Activated T-helper 1 cell treated with anti-CD3 and anti-CD28 coated beads, Interleukin-12 subunit alpha, Interleukin-12 subunit beta, Interleukin-2, Interleukin-4 antibody, amounts not matched to agents 30 ng/mL and 10 ng/mL and 1 ng/mL, durations not matched to agents 14 hours and 24 hours and 36 hours (primary cell): ENCODE measurements at regions of chr5 and their contacts with region 1.

Region 1: DNA sequence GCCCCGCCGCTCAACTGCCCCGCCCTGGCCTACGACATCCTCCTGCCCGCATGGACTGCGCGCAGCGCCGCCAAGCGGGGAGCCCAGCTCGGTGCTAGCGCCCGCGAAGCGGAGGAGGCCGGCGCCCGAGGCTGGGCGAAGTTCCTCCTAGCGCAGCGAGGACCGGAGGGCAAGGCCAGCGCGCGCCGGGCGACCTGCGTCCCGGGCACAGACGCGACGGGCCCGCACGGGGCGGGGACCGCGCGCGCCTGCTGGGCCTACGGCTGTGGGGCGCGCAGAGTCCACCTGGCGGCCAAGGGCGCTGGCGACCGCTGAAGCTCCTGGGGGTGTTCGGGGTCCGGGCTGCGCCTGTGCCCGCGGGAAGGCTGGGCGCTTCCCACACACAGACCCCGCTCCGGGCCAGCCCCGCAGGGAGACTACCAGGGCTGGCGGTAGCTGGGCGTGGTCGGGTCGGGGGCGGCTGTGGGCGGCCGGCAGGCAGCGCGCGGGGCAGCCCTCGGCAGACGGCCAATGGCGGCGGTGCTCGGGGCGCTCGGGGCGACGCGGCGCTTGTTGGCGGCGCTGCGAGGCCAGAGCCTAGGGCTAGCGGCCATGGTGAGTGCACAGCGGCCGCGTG is at the start of gene PCBD2:
- DNase-seq: peak; percentile 91
- H3K4me3 Mint-ChIP-seq: peak within 1 kb of the TSS; percentile 94
- H3K27ac Mint-ChIP-seq: peak within 1 kb of the TSS; percentile 99
- H3K4me1 Mint-ChIP-seq: peaks cover 15% of the 10 kb centered on the region
- H3K27me3 Mint-ChIP-seq: no peaks in the 10 kb centered on the region
- total RNA-seq, gene PCBD2: 13.5 and 17.2 TPM in 2 replicates

Region 2: GRCh38 chr5:134176511-134177368 is 728.0 kb before region 1 on chr5 and contains the start of gene SKP1:
- intact Hi-C with region 1: loop called (anchors 2 kb)
- DNase-seq: peak; percentile 85
- H3K4me3 Mint-ChIP-seq: peak within 1 kb of the TSS; percentile 96
- H3K27ac Mint-ChIP-seq: peak within 1 kb of the TSS; percentile 97
- H3K4me1 Mint-ChIP-seq: peaks cover 28% of the 10 kb centered on the region
- H3K27me3 Mint-ChIP-seq: peaks cover 6% of the 10 kb centered on the region
- total RNA-seq, gene SKP1: 259 and 265 TPM in 2 replicates

Region 3: DNA sequence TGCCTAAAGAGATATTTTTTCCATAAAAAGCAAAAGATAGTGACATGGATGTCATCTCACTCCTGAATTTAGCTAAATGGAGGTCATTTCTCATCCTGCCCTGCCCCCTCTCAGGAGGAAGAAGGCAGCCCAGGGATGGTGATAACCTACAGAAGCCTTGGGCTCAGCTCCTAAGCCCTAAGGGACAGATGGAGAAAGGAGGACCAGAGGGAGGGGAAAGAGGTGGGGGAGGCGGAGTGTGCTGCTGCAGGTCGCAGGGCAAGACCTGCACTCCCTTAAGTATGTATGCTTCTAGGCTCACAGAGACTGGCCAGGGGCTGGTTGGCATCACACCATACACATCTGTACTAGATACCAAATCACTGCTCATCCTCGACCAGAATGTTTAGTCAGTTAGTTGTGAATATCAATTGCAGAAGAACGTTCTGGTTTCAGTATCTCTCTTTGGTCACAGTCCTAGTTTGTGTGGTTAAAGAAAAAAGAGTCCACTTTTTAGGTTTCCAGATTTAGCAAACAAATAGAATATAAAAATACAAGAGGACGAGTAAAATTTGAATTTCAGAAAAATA is 474.7 kb before region 1 on chr5:
- intact Hi-C with region 1: no loop called
- DNase-seq: no peak
- H3K4me3 Mint-ChIP-seq: no peak overlapping the region
- H3K27ac Mint-ChIP-seq: no peak overlapping the region
- H3K4me1 Mint-ChIP-seq: peaks cover 13% of the 10 kb centered on the region
- H3K27me3 Mint-ChIP-seq: peaks cover 23% of the 10 kb centered on the region

Region 4: GRCh38 chr5:134758504-134759341 is 146.0 kb before region 1 on chr5 and contains the start of gene DDX46:
- intact Hi-C with region 1: loop called (anchors 1 kb)
- DNase-seq: peak; percentile 94
- H3K4me3 Mint-ChIP-seq: peak within 1 kb of the TSS; percentile 100
- H3K27ac Mint-ChIP-seq: peak within 1 kb of the TSS; percentile 99
- H3K4me1 Mint-ChIP-seq: peaks cover 28% of the 10 kb centered on the region
- H3K27me3 Mint-ChIP-seq: no peaks in the 10 kb centered on the region
- total RNA-seq, gene DDX46: 78.3 and 84.4 TPM in 2 replicates

Region 5: DNA sequence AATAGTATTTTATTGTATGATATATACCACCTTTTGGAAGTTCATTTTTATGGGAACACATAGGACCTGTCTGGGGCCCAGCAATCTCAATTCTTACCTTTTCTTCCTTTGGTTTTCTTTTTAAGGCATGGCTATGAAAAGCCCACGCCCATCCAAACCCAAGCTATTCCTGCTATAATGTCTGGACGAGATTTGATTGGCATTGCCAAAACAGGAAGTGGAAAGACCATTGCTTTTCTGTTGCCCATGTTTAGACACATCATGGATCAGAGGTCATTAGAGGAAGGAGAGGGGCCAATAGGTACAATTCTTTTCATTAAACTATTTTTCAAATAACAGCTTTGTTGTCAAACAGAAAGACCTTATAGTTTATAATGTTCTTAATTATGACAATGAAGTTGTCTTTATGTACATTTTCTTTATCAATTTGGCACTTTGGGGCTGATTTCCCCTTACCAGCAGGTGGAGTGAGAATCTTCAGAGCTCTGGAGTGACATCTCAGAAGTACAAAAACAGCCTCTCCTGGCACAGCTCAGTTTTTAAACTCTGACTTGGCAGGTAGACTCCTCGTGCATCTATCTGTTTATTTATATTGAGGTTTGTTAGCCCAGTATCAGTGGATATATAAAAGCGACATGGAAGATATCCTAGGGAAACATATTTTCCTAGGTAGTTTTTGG is 120.4 kb before region 1 on chr5:
- intact Hi-C with region 1: loop called (anchors 1 kb)
- DNase-seq: no peak
- H3K4me3 Mint-ChIP-seq: no peak overlapping the region
- H3K27ac Mint-ChIP-seq: no peak overlapping the region
- H3K4me1 Mint-ChIP-seq: no peaks in the 10 kb centered on the region
- H3K27me3 Mint-ChIP-seq: no peaks in the 10 kb centered on the region

Region 6: DNA sequence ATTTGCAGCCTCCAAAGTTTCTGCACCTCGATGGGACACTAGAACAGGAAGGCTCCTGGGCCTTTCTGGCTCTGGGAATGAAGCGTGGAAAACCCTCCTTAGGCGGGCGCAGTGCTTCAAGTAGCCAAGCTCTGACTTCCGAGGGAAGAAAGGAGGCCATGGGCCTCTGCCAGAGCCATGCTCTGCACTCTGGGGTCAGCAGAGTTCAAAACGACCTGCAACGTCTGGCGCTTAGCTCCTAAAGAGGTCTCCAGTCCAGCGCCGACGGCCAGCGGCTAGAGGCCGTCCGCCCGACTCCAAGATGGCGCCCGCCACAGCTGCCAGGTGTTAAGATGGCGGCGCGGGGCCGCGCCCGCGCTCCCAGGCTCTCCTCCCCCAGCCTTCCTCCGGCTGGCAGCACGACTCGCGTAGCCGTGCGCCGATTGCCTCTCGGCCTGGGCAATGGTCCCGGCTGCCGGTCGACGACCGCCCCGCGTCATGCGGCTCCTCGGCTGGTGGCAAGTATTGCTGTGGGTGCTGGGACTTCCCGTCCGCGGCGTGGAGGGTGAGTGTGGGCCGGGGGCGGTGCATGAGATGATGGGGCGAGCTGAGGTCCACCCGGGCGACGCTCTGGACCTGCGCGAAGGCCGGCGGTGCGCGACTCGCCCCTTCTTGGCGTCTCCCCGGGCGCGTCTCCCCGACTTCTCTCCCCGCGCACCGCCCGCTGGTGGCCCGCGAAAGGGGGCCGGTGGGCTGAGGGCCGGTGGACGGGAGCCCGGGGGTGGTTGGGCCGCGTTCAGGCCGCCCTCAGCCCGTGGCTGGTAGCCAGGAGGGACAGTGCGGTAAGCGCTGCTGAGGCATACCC is 30.5 kb before region 1 on chr5 and contains the start of gene TXNDC15:
- intact Hi-C with region 1: loop called (anchors 1 kb)
- DNase-seq: peak; percentile 82
- H3K4me3 Mint-ChIP-seq: peak within 1 kb of the TSS; percentile 100
- H3K27ac Mint-ChIP-seq: peak within 1 kb of the TSS; percentile 98
- H3K4me1 Mint-ChIP-seq: peaks cover 43% of the 10 kb centered on the region
- H3K27me3 Mint-ChIP-seq: no peaks in the 10 kb centered on the region
- total RNA-seq, gene TXNDC15: 57.1 and 67.2 TPM in 2 replicates

Region 7: GRCh38 chr5:134920848-134921575 is 16.3 kb after region 1 on chr5:
- intact Hi-C with region 1: loop called (anchors 1 kb)
- DNase-seq: no peak
- H3K4me3 Mint-ChIP-seq: no peak overlapping the region
- H3K27ac Mint-ChIP-seq: peak overlapping the region; percentile 77
- H3K4me1 Mint-ChIP-seq: peaks cover 24% of the 10 kb centered on the region
- H3K27me3 Mint-ChIP-seq: no peaks in the 10 kb centered on the region

Region 8: DNA sequence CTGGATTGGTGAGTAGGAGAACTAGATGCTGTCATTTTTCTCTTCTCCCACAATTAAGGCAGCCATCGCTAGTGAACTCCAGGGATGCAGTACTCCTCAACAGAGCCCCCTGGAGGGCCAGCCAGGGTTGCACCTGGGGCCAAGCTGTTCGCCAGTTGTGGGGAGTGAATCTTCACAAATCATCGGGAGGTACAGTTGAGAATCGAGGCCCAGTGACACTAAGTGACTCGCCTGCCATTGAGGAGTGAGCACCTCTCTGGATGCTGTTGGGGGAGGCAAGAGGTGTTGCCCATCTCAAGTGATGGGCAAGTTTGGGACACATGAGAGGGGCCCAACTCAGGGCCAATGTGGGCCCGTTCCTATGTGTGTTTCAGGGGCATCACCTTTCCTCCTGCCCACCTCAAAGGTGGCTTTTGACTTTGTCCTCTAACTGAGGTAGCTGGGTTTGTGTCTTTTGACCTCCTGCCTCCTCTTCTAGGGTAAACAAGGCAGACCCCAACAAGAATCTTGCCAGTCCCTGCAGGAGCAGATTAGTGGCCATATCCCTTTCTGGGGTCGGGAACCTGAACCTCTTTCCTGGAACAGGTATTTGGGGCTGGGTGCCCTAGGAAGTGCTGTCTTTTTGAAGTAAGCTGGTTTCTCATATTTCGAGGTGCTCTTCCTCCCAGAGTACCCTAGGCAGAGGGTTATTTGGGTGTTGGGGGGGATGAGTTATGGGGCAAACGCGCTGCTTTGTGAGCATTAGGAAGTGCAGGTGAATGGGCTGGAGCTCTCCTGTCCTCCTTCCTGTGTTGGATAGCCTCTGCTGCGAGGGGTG is 313.1 kb after region 1 on chr5:
- intact Hi-C with region 1: no loop called
- DNase-seq: no peak
- H3K4me3 Mint-ChIP-seq: no peak overlapping the region
- H3K27ac Mint-ChIP-seq: no peak overlapping the region
- H3K4me1 Mint-ChIP-seq: no peaks in the 10 kb centered on the region
- H3K27me3 Mint-ChIP-seq: peaks cover 11% of the 10 kb centered on the region